Aorta (tissue), 5 donors: ENCODE measurements at regions of chr14 and their contacts with region 1.

Region 1: DNA sequence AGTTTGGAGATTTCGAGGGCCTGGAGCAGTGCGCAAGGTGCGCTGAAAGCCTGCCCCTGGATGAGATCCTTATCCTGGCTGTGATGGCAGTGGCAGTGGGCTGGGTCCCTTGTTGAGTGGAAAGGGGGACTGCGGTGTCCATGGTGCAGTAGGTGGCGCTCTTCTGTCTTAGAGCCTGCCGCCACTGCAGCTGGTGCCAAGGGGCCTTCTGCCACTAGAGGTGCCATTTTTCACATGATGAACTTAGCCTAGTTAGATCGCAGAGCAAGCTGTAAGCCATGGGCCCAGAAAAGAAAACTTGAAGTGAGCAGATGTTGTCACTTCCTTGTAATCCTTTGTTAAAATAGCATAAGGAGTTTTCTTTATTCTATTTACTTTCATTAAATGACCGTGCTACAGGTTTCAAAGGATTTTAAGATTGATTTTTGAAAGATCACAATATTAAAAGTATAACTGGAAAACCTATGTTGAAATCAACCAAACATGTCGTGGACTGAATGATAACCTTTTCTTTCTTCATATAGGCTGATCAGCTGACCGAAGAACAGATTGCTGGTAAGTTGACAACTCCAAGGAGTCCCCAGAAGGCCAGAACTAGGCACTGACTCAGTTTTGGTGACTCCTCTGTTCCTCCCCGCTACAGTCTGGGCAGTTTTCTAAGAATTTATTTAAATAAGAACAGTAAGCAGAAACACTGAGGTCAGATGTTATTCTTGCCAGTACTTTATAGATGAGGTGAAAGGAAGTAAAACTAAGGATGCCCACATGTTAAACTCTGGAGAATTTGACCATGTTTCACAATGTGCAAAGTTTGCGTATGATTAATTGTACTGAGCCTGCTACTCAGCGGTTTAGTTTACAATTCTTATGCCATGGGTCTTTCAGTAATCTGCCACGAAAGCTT is 3.0 kb downstream of the CALM1 start:
- DNase-seq: peak; percentile 94
- ATAC-seq: peak; percentile 86
- H3K4me3 ChIP-seq: peak overlapping the region; percentile 77 to 99
- H3K27ac ChIP-seq: peak overlapping the region; percentile 30 to 40
- H3K4me1 ChIP-seq: peaks cover 0 to 4% of the 10 kb centered on the region in 2 donors
- H3K27me3 ChIP-seq: peaks cover 0 to 2% of the 10 kb centered on the region in 2 donors

Region 2: GRCh38 chr14:90301668-90302090 is 98.1 kb before region 1 on chr14:
- intact Hi-C with region 1: loop called in 1 of 2 experiments (anchors 10 kb)
- DNase-seq: no peak
- ATAC-seq: peak; percentile 78
- H3K4me3 ChIP-seq: no peak overlapping the region
- H3K27ac ChIP-seq: peak overlapping the region in 1 of 2 donors; percentile 61
- H3K4me1 ChIP-seq: peaks cover 0 to 3% of the 10 kb centered on the region in 2 donors
- H3K27me3 ChIP-seq: no peaks in the 10 kb centered on the region

Region 3: DNA sequence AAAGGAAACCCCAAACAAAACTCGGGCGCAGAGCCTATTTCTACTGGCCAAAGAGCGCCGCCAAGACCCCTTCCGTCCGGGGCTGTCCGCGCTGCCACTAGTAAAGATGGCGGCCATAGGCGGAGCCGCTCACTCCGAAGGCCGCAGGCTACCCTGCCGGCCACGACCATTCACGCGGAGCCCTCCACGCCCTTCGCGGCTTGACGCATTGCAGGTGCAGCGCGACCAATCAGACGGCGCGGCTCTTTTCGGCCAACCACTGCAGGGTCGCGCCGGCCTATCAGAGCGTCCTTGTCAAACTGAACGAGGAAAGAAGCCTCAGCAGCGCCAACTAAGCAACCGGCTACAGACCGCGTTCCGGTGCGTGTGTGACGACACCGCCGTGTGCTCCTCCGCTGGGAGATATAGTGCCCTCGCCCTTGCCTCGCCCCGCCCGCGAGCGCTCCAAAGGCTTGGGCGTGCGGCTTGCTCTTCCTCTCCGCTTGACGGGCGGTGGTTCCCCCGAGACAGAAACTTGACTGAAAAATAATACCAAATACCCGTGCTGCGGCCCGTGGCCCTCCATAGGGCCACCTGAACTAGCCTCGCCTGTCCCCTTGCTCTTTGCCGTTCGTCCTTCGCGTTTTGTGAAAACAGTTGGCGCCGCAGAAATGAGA is 16.6 kb before region 1 on chr14:
- intact Hi-C with region 1: loop called (anchors 1 to 2 kb)
- DNase-seq: peak; percentile 100
- ATAC-seq: peak; percentile 99
- H3K4me3 ChIP-seq: peak overlapping the region; percentile 53 to 80
- H3K27ac ChIP-seq: peak overlapping the region; percentile 98 to 100
- H3K4me1 ChIP-seq: peaks cover 0 to 4% of the 10 kb centered on the region in 2 donors
- H3K27me3 ChIP-seq: no peaks in the 10 kb centered on the region

Region 4: DNA sequence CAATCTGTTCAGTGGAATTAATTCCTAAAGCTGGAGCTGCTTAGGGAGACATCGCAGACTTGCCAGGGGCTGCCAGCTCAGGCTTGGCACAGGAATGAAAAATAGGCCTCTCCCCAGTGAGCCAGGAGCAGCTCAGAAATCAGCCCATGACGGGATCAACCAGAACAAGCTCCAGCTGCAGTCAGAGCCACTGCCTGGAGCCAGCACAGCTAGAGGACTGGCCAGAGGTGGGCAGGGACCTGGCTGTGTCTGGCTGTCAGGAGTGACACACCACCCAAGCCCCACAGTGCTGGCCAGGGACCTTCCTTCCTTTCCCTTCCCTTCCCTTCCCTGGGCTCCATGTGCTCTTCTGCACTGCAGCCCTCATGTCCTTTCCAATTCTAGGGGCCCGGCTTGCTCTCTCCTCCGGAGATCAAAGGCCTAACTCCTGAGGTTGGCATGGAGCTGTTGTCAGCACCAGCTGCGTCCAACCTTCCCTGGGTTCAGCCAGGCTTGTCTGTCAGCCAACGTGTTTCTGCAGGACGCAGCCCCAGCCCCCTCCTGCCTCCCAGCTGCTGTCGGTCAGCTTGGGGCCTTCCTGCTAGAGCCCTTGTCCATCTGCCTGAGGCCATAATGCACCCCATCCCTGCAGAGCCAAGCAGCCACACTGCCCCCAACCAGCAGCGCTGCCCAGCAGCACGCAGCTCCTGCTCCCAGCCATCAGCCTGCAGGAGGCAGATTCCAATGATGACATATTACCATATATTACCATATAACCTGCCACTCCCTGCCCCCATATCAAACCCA is 146.4 kb after region 1 on chr14:
- intact Hi-C with region 1: loop called in 1 of 2 experiments (anchors 5 kb)
- DNase-seq: peak; percentile 84 to 85
- ATAC-seq: peak; percentile 80
- H3K4me3 ChIP-seq: no peak overlapping the region
- H3K27ac ChIP-seq: peak overlapping the region in 1 of 2 donors; percentile 77
- H3K4me1 ChIP-seq: no peaks in the 10 kb centered on the region
- H3K27me3 ChIP-seq: no peaks in the 10 kb centered on the region

Region 5: GRCh38 chr14:90624223-90624622 is 224.4 kb after region 1 on chr14:
- intact Hi-C with region 1: loop called in 1 of 2 experiments (anchors 10 kb)
- DNase-seq: peak in 1 of 2 donors; percentile 84
- ATAC-seq: no peak
- H3K4me3 ChIP-seq: no peak overlapping the region
- H3K27ac ChIP-seq: no peak overlapping the region
- H3K4me1 ChIP-seq: no peaks in the 10 kb centered on the region
- H3K27me3 ChIP-seq: no peaks in the 10 kb centered on the region

Region 6: GRCh38 chr14:90697577-90698206 is 297.9 kb after region 1 on chr14:
- intact Hi-C with region 1: loop called in 1 of 2 experiments (anchors 2 kb)
- DNase-seq: peak; percentile 89 to 92
- ATAC-seq: peak; percentile 96
- H3K4me3 ChIP-seq: no peak overlapping the region
- H3K27ac ChIP-seq: peak overlapping the region; percentile 52 to 53
- H3K4me1 ChIP-seq: no peaks in the 10 kb centered on the region
- H3K27me3 ChIP-seq: no peaks in the 10 kb centered on the region